Colonic mucosa (tissue), 4 donors: ENCODE measurements at regions of chr17 and their contacts with region 1.

Region 1: DNA sequence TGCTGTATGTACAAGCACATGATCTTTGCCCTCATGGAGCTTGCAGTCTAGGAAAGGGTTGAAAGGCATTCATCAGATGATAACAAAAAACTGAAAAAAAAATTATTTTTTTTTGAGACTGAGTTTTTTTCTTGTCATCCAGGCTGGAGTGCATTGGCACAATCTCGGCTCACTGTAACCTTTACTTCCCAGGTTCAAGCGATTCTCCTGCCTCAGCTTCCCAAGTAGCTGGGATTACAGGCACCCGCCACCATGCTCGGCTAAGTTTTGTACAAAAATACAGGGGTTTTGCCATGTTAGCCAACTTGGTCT is 38.7 kb upstream of the BCAS3 start:
- DNase-seq: no peak
- H3K4me3 ChIP-seq: no peak overlapping the region
- H3K27ac ChIP-seq: no peak overlapping the region
- H3K4me1 ChIP-seq: no peaks in the 10 kb centered on the region
- H3K27me3 ChIP-seq: no peaks in the 10 kb centered on the region
- CTCF ChIP-seq: no peak

Region 2: DNA sequence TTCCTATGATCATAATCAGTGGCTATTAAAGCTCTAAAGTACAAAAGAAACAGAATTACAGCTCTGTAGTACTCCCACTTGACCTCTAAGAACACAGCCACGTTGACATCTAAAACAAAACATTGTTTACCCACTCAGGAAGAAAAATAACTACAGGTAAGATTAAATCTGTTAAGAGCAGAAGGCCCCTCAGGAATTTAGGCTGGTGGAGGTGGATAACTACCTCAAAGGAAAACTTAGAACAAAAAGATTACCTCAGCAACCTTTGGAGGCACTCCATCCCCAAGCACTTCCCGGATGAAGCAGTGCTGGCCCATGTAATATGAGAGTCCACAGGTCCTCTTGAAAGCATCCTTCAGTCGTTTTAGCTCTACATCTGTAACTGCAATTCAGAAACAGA is 293.7 kb before region 1 on chr17:
- intact Hi-C with region 1: no loop called
- DNase-seq: no peak
- H3K4me3 ChIP-seq: no peak overlapping the region
- H3K27ac ChIP-seq: no peak overlapping the region
- H3K4me1 ChIP-seq: no peaks in the 10 kb centered on the region
- H3K27me3 ChIP-seq: no peaks in the 10 kb centered on the region
- CTCF ChIP-seq: no peak

Region 3: DNA sequence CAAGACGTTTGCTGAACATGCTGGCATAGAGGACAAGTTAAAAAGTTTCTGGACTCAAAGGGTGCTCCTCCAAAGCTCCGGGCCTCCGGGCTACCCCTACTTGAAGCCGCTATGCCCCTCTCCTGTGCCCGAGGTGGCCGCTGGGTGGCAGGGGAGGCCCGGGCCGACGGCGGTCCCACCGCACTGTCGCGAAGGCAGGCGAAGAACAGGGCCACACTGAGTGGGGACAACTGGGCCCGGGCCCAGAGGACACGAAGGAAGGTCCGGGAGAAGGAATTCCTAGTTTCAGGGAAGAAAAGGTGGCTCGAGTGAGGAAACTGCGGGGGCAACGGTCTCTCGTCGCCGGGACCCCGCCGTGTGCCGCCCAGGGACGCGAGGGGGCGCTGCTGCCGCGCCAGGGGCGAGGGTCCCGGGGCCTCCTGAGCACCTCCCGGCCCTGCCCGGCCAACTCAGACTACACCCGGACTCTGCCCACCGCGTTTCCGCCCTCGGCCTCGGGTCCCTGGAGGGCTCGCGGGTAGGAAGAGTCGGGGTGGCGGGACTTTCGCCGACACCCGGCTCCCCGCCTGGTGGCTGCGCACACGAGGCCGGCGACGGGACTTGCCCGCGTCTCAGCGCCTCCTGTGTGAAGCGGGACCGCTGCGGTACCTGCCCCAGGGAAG is 217.6 kb before region 1 on chr17:
- intact Hi-C with region 1: no loop called
- DNase-seq: peak; percentile 63
- H3K4me3 ChIP-seq: peak overlapping the region; percentile 42
- H3K27ac ChIP-seq: no peak overlapping the region
- H3K4me1 ChIP-seq: no peaks in the 10 kb centered on the region
- H3K27me3 ChIP-seq: no peaks in the 10 kb centered on the region
- CTCF ChIP-seq: peak; percentile 100

Region 4: DNA sequence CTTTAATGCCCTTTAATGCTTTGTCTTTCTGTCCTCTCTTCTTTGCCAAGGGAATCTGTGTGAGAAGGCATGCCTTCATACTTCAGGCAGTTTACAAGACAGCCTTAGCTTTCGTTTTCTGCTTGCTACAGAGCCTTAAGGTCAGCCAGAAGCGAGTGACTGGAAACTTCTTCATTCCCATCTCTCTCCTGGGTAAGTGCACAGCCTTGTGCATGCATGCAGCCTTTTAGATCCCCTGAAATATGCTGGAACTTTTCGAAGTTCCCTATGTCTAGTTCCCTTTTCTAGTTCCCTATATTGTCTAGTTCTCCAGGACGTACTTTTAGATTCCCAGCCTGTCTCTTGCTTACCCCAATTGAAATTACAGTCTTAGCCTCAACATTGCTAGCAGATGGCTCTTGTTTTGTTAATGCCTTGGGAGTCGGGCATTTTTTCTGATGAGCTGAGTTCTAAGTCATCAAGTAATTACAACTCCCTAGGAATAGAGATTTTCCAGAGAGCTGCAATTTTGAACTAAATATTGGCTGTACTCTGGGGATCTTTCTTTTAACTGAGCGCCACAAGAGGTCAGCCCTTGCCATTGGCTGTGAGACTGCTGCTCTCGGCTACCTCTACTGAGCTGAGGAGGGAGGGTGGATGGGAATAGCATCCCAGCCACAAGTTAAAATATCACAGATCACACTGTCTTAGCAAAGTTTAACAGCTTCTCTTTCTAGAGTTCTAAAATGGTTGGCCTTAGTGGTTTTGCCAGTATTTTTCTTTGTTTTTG is 61.6 kb before region 1 on chr17:
- intact Hi-C with region 1: loop called (anchors 5 kb)
- DNase-seq: peak; percentile 38
- H3K4me3 ChIP-seq: peak overlapping the region; percentile 16
- H3K27ac ChIP-seq: peak overlapping the region; percentile 64
- H3K4me1 ChIP-seq: no peaks in the 10 kb centered on the region
- H3K27me3 ChIP-seq: no peaks in the 10 kb centered on the region
- CTCF ChIP-seq: no peak

Region 5: GRCh38 chr17:61583242-61583641 is 944.3 kb after region 1 on chr17:
- intact Hi-C with region 1: no loop called
- DNase-seq: no peak
- H3K4me3 ChIP-seq: no peak overlapping the region
- H3K27ac ChIP-seq: no peak overlapping the region
- H3K4me1 ChIP-seq: no peaks in the 10 kb centered on the region
- H3K27me3 ChIP-seq: no peaks in the 10 kb centered on the region
- CTCF ChIP-seq: no peak